ENCODE measurements at regions of chr3 and their contacts with region 1.

Region 1: GRCh38 chr3:13884851-13885703 is 5.2 kb upstream of the WNT7A start:
- DNase-seq: peak; percentile 77
- H3K4me3 Mint-ChIP-seq: no peak overlapping the region
- H3K27ac Mint-ChIP-seq: peak overlapping the region; percentile 25
- H3K4me1 Mint-ChIP-seq: no peaks in the 10 kb centered on the region
- H3K27me3 Mint-ChIP-seq: peaks cover 16% of the 10 kb centered on the region

Region 2: GRCh38 chr3:13495921-13496723 is 389.0 kb before region 1 on chr3:
- CTCF ChIA-PET with region 1: interaction called, 7 read pairs
- POLR2A ChIA-PET with region 1: no interaction called
- intact Hi-C with region 1: loop called (anchors 5 kb)
- DNase-seq: peak; percentile 82
- H3K4me3 Mint-ChIP-seq: no peak overlapping the region
- H3K27ac Mint-ChIP-seq: no peak overlapping the region
- H3K4me1 Mint-ChIP-seq: no peaks in the 10 kb centered on the region
- H3K27me3 Mint-ChIP-seq: no peaks in the 10 kb centered on the region

Region 3: GRCh38 chr3:13657660-13658435 is 227.2 kb before region 1 on chr3:
- CTCF ChIA-PET with region 1: interaction called, 567 read pairs
- POLR2A ChIA-PET with region 1: interaction called, 3 read pairs
- intact Hi-C with region 1: loop called (anchors 1 kb)
- DNase-seq: peak; percentile 75
- H3K4me3 Mint-ChIP-seq: no peak overlapping the region
- H3K27ac Mint-ChIP-seq: no peak overlapping the region
- H3K4me1 Mint-ChIP-seq: peaks cover 27% of the 10 kb centered on the region
- H3K27me3 Mint-ChIP-seq: peaks cover 12% of the 10 kb centered on the region

Region 4: GRCh38 chr3:13866041-13866965 is 18.8 kb before region 1 on chr3:
- CTCF ChIA-PET with region 1: interaction called, 35 read pairs
- POLR2A ChIA-PET with region 1: interaction called, 4 read pairs
- intact Hi-C with region 1: loop called (anchors 1 kb)
- DNase-seq: peak; percentile 87
- H3K4me3 Mint-ChIP-seq: peak overlapping the region; percentile 2
- H3K27ac Mint-ChIP-seq: peak overlapping the region; percentile 83
- H3K4me1 Mint-ChIP-seq: peaks cover 52% of the 10 kb centered on the region
- H3K27me3 Mint-ChIP-seq: no peaks in the 10 kb centered on the region

Region 5: DNA sequence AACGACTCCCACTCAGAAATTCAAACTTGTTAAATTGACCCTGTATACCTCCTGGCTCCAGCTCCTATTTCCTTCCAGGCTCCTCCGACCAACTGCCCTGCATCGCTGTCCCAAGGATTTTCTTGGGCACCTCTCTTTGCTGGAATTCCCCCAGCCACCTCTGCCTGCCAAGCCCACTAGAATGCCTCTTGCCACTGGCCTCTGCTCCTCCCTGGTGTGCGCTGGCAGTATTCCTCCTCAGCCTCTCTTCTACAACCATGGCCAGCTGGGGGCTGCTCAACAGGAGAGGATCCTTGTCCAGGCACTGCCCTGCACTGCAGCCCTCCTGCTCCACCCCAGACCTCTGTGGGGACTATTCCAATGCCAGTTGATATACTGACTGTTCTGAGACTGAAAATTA is 12.6 kb before region 1 on chr3:
- CTCF ChIA-PET with region 1: interaction called, 35 read pairs
- POLR2A ChIA-PET with region 1: no interaction called
- intact Hi-C with region 1: no loop called
- DNase-seq: no peak
- H3K4me3 Mint-ChIP-seq: no peak overlapping the region
- H3K27ac Mint-ChIP-seq: no peak overlapping the region
- H3K4me1 Mint-ChIP-seq: peaks cover 27% of the 10 kb centered on the region
- H3K27me3 Mint-ChIP-seq: no peaks in the 10 kb centered on the region